OCI-LY7 (cell line): ENCODE measurements at regions of chr6 and their contacts with region 1.

Region 1: DNA sequence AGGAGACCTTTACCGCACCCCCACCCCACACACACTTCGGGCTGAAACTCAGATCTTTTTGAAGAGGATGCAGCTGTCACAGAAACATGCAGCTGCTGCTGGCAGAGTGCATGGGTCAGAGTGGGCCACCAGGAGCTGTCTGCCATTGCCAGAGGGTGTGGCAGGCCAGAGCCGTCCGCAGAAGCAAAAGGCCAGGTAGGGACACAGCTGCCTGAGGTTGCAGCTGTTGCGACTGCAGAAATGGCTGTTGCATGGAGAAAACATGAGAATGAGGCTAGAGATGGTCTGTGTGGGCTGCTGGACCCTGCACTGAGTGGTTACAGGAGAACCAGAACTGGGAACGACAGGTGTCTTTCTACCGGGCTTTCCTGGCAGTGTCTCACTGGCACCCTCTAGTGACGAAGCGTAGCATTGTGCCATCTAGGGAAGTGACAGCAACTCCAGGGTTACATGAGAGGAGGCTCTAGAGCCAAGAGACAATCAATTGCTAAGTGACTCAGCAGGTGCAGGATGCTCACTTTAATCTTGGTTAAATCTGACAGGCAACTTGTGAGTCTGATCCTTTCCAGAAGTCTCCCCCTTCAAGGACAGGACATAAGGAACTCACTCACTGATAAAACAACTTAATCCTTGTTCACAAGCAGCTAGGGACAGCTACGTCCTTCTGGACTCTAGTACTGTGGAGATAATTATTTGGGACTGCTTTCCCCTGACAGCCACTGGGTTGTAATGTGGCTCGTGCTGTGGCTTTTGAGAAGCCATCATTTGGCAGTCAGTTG is 29.1 kb upstream of the SERPINB9 start:
- DNase-seq: peak; percentile 90
- H3K4me3 ChIP-seq: peak overlapping the region; percentile 51
- H3K27ac ChIP-seq: peak overlapping the region; percentile 30
- H3K4me1 ChIP-seq: peaks cover 25% of the 10 kb centered on the region
- CTCF ChIP-seq: peak; percentile 99

Region 2: DNA sequence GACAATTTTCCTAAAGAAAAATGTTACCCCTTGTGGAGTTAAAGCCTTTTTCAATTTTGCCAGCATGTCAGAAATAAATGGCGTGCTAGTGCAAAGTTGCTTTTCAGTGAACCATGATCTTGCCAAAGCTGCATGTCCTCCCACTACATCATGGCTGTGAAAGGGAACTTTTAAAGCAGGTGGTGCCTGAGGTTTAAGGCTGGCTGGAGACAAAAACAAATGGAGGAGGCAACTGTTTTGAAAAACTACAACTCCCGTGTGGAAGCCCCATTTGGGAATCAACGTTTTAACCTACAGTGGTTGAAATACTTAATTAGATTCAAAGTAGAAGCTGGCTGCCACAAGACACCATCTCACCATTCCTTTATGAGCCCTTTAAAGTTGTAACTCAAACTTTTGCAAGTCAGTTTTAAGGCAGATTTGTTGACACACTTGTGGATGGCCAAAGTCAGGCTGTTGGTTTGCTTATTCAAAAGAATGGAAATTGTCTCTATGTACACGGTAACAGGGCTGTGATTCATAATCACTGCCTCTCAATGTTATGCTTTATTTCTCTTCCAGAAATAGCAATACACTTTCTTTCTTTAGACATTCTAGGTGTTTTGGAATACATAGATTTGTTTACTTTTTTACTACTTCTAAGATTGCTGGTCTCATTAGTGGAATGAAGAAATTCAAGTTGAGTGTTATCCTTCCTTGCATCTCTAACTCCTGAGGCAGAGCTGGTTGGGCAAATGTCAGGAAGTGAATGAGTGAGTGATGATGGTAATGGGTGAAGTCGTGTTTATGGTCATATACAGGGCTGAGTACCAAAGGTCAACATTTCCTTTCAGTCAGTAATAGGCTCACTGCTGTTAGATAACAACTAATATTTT is 490.3 kb before region 1 on chr6:
- CTCF ChIA-PET with region 1: no interaction called
- POLR2A ChIA-PET with region 1: no interaction called
- intact Hi-C with region 1: no loop called
- DNase-seq: no peak
- H3K4me3 ChIP-seq: no peak overlapping the region
- H3K27ac ChIP-seq: no peak overlapping the region
- H3K4me1 ChIP-seq: no peaks in the 10 kb centered on the region
- CTCF ChIP-seq: no peak

Region 3: GRCh38 chr6:2738373-2738979 is 193.7 kb before region 1 on chr6:
- CTCF ChIA-PET with region 1: no interaction called
- POLR2A ChIA-PET with region 1: no interaction called
- intact Hi-C with region 1: loop called (anchors 1 kb)
- DNase-seq: peak; percentile 69
- H3K4me3 ChIP-seq: no peak overlapping the region
- H3K27ac ChIP-seq: no peak overlapping the region
- H3K4me1 ChIP-seq: peaks cover 22% of the 10 kb centered on the region
- CTCF ChIP-seq: peak; percentile 95

Region 4: GRCh38 chr6:2791124-2791974 is 140.8 kb before region 1 on chr6:
- CTCF ChIA-PET with region 1: interaction called, 7 read pairs
- POLR2A ChIA-PET with region 1: interaction called, 4 read pairs
- intact Hi-C with region 1: loop called (anchors 1 kb)
- DNase-seq: peak; percentile 75
- H3K4me3 ChIP-seq: no peak overlapping the region
- H3K27ac ChIP-seq: no peak overlapping the region
- H3K4me1 ChIP-seq: no peaks in the 10 kb centered on the region
- CTCF ChIP-seq: peak; percentile 90

Region 5: GRCh38 chr6:2866181-2866846 is 65.8 kb before region 1 on chr6:
- CTCF ChIA-PET with region 1: no interaction called
- POLR2A ChIA-PET with region 1: interaction called, 16 read pairs
- intact Hi-C with region 1: no loop called
- DNase-seq: no peak
- H3K4me3 ChIP-seq: peak overlapping the region; percentile 28
- H3K27ac ChIP-seq: peak overlapping the region; percentile 99
- H3K4me1 ChIP-seq: peaks cover 78% of the 10 kb centered on the region
- CTCF ChIP-seq: no peak

Region 6: DNA sequence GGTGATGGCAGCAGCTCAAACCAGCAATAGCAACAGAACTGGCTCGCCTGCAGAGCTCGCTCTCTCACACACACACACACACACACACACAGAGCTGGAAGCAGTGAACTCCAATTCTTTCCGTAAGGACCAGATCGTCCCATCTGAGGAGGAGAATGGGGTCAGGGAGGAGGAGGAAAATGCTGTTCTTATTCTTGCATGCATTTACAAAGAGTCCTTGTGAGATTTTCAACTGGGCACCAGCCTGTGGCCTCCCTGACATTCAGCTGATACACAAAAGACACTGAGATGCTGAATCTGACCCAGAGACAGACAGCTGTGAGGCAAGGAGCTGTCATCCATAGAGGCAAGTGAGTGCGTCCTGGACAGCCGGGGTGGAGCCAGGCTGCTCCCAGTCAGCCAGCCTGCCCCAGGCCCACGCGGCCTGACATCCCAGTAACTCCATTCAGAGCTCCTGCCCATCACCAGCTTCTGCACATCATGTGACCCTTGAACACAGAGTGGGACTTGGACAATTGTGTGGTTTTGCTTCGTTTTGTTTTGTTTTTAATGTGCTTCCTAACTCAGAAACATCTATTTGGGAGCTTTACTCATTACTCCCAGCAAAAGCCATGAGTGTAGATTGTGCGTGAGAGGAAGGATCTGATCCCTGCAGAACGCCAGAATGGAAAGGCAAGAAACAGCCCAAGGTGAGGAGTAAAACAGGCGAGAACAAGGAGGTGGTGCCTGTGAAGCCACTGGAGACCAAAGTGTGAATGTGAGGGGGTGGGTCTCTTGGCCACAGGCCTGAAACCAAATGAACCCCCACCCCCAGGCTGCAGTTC is 31.1 kb before region 1 on chr6:
- CTCF ChIA-PET with region 1: interaction called, 3 read pairs
- POLR2A ChIA-PET with region 1: interaction called, 10 read pairs
- intact Hi-C with region 1: loop called (anchors 2 kb)
- DNase-seq: no peak
- H3K4me3 ChIP-seq: peak overlapping the region; percentile 73
- H3K27ac ChIP-seq: peak overlapping the region; percentile 81
- H3K4me1 ChIP-seq: peaks cover 69% of the 10 kb centered on the region
- CTCF ChIP-seq: no peak

Region 7: GRCh38 chr6:2911171-2911570 is 21.0 kb before region 1 on chr6:
- CTCF ChIA-PET with region 1: interaction called, 4 read pairs
- POLR2A ChIA-PET with region 1: interaction called, 9 read pairs
- intact Hi-C with region 1: loop called (anchors 1 kb)
- DNase-seq: peak; percentile 87
- H3K4me3 ChIP-seq: peak overlapping the region; percentile 43
- H3K27ac ChIP-seq: peak overlapping the region; percentile 87
- H3K4me1 ChIP-seq: peaks cover 57% of the 10 kb centered on the region
- CTCF ChIP-seq: no peak

Region 8: GRCh38 chr6:2942914-2943571 is 10.9 kb after region 1 on chr6:
- CTCF ChIA-PET with region 1: interaction called, 3 read pairs
- POLR2A ChIA-PET with region 1: interaction called, 14 read pairs
- intact Hi-C with region 1: no loop called
- DNase-seq: peak; percentile 62
- H3K4me3 ChIP-seq: peak overlapping the region; percentile 56
- H3K27ac ChIP-seq: peak overlapping the region; percentile 87
- H3K4me1 ChIP-seq: peaks cover 80% of the 10 kb centered on the region
- CTCF ChIP-seq: no peak